Right cardiac atrium (tissue), 5 donors: ENCODE measurements at regions of chr17 and their contacts with region 1.

Region 1: DNA sequence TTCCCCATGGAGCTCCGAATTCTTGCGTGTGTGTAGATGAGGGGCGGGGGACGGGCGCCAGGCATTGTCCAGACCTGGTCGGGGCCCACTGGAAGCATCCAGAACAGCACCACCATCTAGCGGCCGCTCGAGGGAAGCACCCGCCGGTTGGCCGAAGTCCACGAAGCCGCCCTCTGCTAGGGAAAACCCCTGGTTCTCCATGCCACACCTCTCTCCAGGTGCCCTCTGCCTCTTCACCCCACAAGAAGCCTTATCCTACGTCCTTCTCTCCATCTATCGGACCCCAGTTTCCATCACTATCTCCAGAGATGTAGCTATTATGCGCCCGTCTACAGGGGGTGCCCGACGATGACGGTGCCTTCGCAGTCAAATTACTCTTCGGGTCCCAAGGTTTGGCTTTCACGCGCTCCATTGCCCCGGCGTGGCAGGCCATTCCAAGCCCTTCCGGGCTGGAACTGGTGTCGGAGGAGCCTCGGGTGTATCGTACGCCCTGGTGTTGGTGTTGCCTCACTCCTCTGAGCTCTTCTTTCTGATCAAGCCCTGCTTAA is 617 bp upstream of the SENP3 start:
- DNase-seq: peak; percentile 92 to 96 (median 96)
- ATAC-seq: peak; percentile 68 to 76
- H3K4me3 ChIP-seq: peak overlapping the region; percentile 78
- H3K27ac ChIP-seq: peak overlapping the region; percentile 87
- H3K4me1 ChIP-seq: peaks cover 8% of the 10 kb centered on the region
- H3K27me3 ChIP-seq: no peaks in the 10 kb centered on the region

Region 2: GRCh38 chr17:7515911-7516610 is 45.0 kb before region 1 on chr17:
- intact Hi-C with region 1: loop called (anchors 2 to 5 kb)
- DNase-seq: no peak
- ATAC-seq: no peak
- H3K4me3 ChIP-seq: no peak overlapping the region
- H3K27ac ChIP-seq: no peak overlapping the region
- H3K4me1 ChIP-seq: no peaks in the 10 kb centered on the region
- H3K27me3 ChIP-seq: no peaks in the 10 kb centered on the region